Mammary epithelial cell (primary cell): ENCODE measurements at regions of chr2 and their contacts with region 1.

Region 1: GRCh38 chr2:208033758-208034502 is 8.6 kb upstream of the PLEKHM3 start:
- DNase-seq: peak; percentile 90
- H3K4me3 ChIP-seq: no peak overlapping the region
- H3K27ac ChIP-seq: peak overlapping the region; percentile 4
- H3K4me1 ChIP-seq: no peaks in the 10 kb centered on the region
- H3K27me3 ChIP-seq: no peaks in the 10 kb centered on the region
- CTCF ChIP-seq: peak; percentile 68 to 76

Region 2: DNA sequence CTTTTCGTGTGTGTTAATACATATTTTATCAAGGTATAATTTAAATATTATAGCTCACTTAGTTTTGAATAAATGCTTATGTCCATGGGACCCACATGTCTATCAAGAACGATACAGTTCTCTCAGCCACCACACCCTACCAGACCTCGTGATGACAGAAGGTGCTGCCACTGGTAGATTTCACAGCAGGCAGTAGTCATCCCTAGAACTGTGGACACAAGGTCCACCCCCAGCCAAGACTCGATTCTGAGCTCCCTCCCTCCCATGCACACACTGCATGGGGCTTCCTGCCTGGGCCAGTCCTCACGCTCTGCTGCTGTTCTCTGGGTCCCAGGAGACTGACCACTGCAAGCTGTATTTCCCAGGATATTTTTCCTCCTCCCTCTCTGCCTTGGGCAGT is 530.7 kb before region 1 on chr2:
- CTCF ChIA-PET with region 1: no interaction called
- dilution Hi-C with region 1: no loop called
- in situ Hi-C with region 1: no loop called
- intact Hi-C with region 1: loop called (anchors 10 kb)
- DNase-seq: no peak
- H3K4me3 ChIP-seq: no peak overlapping the region
- H3K27ac ChIP-seq: no peak overlapping the region
- H3K4me1 ChIP-seq: peaks cover 37% of the 10 kb centered on the region
- H3K27me3 ChIP-seq: no peaks in the 10 kb centered on the region
- CTCF ChIP-seq: no peak

Region 3: GRCh38 chr2:207746131-207746530 is 287.8 kb before region 1 on chr2:
- CTCF ChIA-PET with region 1: interaction called, 5 read pairs
- dilution Hi-C with region 1: no loop called
- in situ Hi-C with region 1: loop called in 1 of 2 experiments (anchors 10 kb)
- intact Hi-C with region 1: loop called (anchors 1 kb)
- DNase-seq: peak; percentile 37
- H3K4me3 ChIP-seq: no peak overlapping the region
- H3K27ac ChIP-seq: no peak overlapping the region
- H3K4me1 ChIP-seq: no peaks in the 10 kb centered on the region
- H3K27me3 ChIP-seq: no peaks in the 10 kb centered on the region
- CTCF ChIP-seq: peak; percentile 86 to 93

Region 4: GRCh38 chr2:207854484-207855440 is 179.2 kb before region 1 on chr2:
- CTCF ChIA-PET with region 1: no interaction called
- dilution Hi-C with region 1: no loop called
- in situ Hi-C with region 1: no loop called
- intact Hi-C with region 1: loop called (anchors 5 kb)
- DNase-seq: no peak
- H3K4me3 ChIP-seq: no peak overlapping the region
- H3K27ac ChIP-seq: no peak overlapping the region
- H3K4me1 ChIP-seq: no peaks in the 10 kb centered on the region
- H3K27me3 ChIP-seq: no peaks in the 10 kb centered on the region
- CTCF ChIP-seq: no peak

Region 5: DNA sequence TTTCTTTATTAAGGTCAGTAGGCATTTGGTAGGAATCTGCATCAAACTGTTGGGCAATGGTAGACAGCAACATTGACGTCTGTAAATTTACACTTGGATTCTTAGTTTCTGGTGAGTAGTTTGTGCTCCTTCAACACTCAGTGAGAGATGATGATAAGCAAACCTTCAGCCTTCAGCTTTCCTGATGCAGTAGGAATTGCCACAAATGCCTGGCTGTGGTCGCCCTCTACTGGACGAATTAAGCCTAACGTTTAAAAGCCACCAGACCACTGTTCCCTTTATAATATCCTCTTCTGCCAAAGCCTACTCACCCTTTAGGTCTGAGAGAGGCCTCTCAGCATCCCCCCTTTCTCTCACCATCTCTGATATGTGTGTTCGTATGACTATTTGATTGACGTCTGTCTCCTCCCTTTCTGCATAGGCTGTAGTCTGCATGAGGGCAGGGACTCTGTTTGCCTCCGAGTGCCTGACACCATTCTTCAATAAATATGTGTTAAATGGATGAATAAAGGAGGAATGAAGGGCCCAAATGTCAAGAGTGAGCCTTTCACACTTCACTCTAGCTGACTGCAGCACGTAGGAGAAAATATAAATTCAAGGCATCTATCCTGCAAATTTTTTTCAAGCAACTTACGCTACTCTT is 38.4 kb after region 1 on chr2:
- CTCF ChIA-PET with region 1: no interaction called
- dilution Hi-C with region 1: no loop called
- in situ Hi-C with region 1: no loop called
- intact Hi-C with region 1: loop called (anchors 5 kb)
- DNase-seq: peak; percentile 43
- H3K4me3 ChIP-seq: no peak overlapping the region
- H3K27ac ChIP-seq: no peak overlapping the region
- H3K4me1 ChIP-seq: no peaks in the 10 kb centered on the region
- H3K27me3 ChIP-seq: no peaks in the 10 kb centered on the region
- CTCF ChIP-seq: peak; percentile 70 to 87

Region 6: GRCh38 chr2:208183526-208183925 is 149.6 kb after region 1 on chr2:
- CTCF ChIA-PET with region 1: no interaction called
- dilution Hi-C with region 1: no loop called
- in situ Hi-C with region 1: no loop called
- intact Hi-C with region 1: no loop called
- DNase-seq: no peak
- H3K4me3 ChIP-seq: no peak overlapping the region
- H3K27ac ChIP-seq: no peak overlapping the region
- H3K4me1 ChIP-seq: peaks cover 5% of the 10 kb centered on the region
- H3K27me3 ChIP-seq: no peaks in the 10 kb centered on the region
- CTCF ChIP-seq: no peak